CD4-positive, alpha-beta T cell (primary cell): ENCODE measurements at regions of chr2 and their contacts with region 1.

Region 1: DNA sequence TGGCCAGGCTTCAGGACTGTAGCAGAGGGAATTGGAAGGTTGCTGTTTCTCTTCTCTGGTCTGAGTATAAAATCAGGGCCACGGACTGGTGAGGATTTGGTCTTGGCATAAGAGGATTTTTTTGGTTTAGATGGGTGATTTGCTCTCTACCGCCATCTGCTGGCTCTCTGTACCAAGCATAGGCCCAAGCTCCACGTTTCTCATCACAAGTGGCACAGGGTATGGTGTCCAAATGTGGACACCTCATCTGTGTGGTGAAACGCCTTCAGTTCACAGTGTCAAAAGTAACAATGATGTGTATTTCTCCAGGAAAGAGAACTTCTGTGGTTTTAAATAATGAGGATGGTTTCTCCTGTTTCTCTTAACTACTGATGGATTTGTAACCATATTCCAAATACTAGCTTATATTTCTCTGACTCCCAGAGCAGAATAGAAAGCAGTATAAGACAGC is 115.1 kb downstream of the EML6 start:
- DNase-seq: peak; percentile 37 to 82 (median 54)
- ATAC-seq: peak; percentile 73
- H3K4me3 ChIP-seq: no peak overlapping the region
- H3K4me3 Mint-ChIP-seq: no peak overlapping the region
- H3K27ac ChIP-seq: no peak overlapping the region
- H3K27ac Mint-ChIP-seq: no peak overlapping the region
- H3K4me1 ChIP-seq: no peaks in the 10 kb centered on the region
- H3K4me1 Mint-ChIP-seq: no peaks in the 10 kb centered on the region
- H3K27me3 ChIP-seq: no peaks in the 10 kb centered on the region
- H3K27me3 Mint-ChIP-seq: no peaks in the 10 kb centered on the region
- CTCF ChIP-seq: peak; percentile 92

Region 2: GRCh38 chr2:54106631-54107454 is 731.8 kb before region 1 on chr2:
- CTCF ChIA-PET with region 1: interaction called, 5 read pairs
- POLR2A ChIA-PET with region 1: no interaction called
- intact Hi-C with region 1: loop called (anchors 1 to 5 kb)
- DNase-seq: peak in 12 of 14 experiments; percentile 11 to 77 (median 30)
- ATAC-seq: peak; percentile 78
- H3K4me3 ChIP-seq: no peak overlapping the region
- H3K4me3 Mint-ChIP-seq: no peak overlapping the region
- H3K27ac ChIP-seq: no peak overlapping the region
- H3K27ac Mint-ChIP-seq: no peak overlapping the region
- H3K4me1 ChIP-seq: peaks cover 8% of the 10 kb centered on the region
- H3K4me1 Mint-ChIP-seq: peaks cover 11% of the 10 kb centered on the region
- H3K27me3 ChIP-seq: no peaks in the 10 kb centered on the region
- H3K27me3 Mint-ChIP-seq: no peaks in the 10 kb centered on the region
- CTCF ChIP-seq: peak; percentile 66

Region 3: GRCh38 chr2:54531558-54531957 is 307.1 kb before region 1 on chr2:
- CTCF ChIA-PET with region 1: no interaction called
- POLR2A ChIA-PET with region 1: no interaction called
- intact Hi-C with region 1: no loop called
- DNase-seq: no peak
- ATAC-seq: no peak
- H3K4me3 ChIP-seq: no peak overlapping the region
- H3K4me3 Mint-ChIP-seq: no peak overlapping the region
- H3K27ac ChIP-seq: no peak overlapping the region
- H3K27ac Mint-ChIP-seq: no peak overlapping the region
- H3K4me1 ChIP-seq: no peaks in the 10 kb centered on the region
- H3K4me1 Mint-ChIP-seq: peaks cover 18% of the 10 kb centered on the region
- H3K27me3 ChIP-seq: no peaks in the 10 kb centered on the region
- H3K27me3 Mint-ChIP-seq: no peaks in the 10 kb centered on the region
- CTCF ChIP-seq: no peak

Region 4: DNA sequence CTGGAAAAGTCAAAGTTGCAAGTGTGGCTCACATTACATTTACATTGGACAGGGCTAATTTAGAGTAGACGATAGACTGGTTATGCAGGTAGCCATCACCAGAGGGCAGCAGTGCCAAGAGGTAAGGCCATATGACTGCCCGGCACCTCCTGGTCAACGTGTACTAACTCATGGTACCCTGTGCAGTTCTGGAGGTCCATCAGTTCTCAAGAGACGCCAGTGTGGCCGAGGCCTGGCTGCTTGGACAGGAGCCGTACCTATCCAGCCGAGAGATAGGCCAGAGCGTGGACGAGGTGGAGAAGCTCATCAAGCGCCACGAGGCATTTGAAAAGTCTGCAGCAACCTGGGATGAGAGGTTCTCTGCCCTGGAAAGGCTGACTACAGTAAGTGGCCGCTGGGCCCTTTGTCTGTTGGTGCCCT is 180.9 kb before region 1 on chr2:
- CTCF ChIA-PET with region 1: no interaction called
- POLR2A ChIA-PET with region 1: no interaction called
- intact Hi-C with region 1: loop called (anchors 5 to 10 kb)
- DNase-seq: peak in 5 of 14 experiments; percentile 12 to 49 (median 39)
- ATAC-seq: peak; percentile 49
- H3K4me3 ChIP-seq: no peak overlapping the region
- H3K4me3 Mint-ChIP-seq: no peak overlapping the region
- H3K27ac ChIP-seq: no peak overlapping the region
- H3K27ac Mint-ChIP-seq: peak overlapping the region; percentile 61
- H3K4me1 ChIP-seq: no peaks in the 10 kb centered on the region
- H3K4me1 Mint-ChIP-seq: no peaks in the 10 kb centered on the region
- H3K27me3 ChIP-seq: no peaks in the 10 kb centered on the region
- H3K27me3 Mint-ChIP-seq: no peaks in the 10 kb centered on the region
- CTCF ChIP-seq: peak; percentile 55

Region 5: DNA sequence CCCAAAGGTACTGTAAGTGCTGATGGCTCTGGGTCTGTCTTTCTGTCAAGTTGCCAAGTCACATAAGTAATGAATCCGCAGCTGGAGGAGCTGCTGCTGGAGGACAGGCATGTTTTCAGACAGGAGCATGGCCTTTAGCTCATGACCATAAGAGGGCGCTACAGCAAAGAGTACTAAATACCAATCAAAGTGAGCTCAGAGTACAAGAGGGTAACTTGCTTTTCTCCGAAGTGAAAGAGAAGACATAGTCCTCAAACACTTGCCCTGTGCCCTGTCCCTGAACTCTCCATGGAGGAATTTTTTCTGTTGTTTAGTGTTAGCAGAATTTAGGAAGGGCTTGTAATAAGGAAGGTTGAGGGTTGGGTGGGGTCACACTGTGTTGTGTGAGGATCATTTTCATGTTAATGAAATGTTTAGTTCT is 173.2 kb before region 1 on chr2:
- CTCF ChIA-PET with region 1: interaction called, 10 read pairs
- POLR2A ChIA-PET with region 1: no interaction called
- intact Hi-C with region 1: loop called in 1 of 2 experiments (anchors 10 kb)
- DNase-seq: peak in 9 of 14 experiments; percentile 10 to 71 (median 32)
- ATAC-seq: peak; percentile 77
- H3K4me3 ChIP-seq: no peak overlapping the region
- H3K4me3 Mint-ChIP-seq: no peak overlapping the region
- H3K27ac ChIP-seq: no peak overlapping the region
- H3K27ac Mint-ChIP-seq: peak overlapping the region; percentile 18
- H3K4me1 ChIP-seq: no peaks in the 10 kb centered on the region
- H3K4me1 Mint-ChIP-seq: peaks cover 5% of the 10 kb centered on the region
- H3K27me3 ChIP-seq: no peaks in the 10 kb centered on the region
- H3K27me3 Mint-ChIP-seq: no peaks in the 10 kb centered on the region
- CTCF ChIP-seq: peak; percentile 55

Region 6: DNA sequence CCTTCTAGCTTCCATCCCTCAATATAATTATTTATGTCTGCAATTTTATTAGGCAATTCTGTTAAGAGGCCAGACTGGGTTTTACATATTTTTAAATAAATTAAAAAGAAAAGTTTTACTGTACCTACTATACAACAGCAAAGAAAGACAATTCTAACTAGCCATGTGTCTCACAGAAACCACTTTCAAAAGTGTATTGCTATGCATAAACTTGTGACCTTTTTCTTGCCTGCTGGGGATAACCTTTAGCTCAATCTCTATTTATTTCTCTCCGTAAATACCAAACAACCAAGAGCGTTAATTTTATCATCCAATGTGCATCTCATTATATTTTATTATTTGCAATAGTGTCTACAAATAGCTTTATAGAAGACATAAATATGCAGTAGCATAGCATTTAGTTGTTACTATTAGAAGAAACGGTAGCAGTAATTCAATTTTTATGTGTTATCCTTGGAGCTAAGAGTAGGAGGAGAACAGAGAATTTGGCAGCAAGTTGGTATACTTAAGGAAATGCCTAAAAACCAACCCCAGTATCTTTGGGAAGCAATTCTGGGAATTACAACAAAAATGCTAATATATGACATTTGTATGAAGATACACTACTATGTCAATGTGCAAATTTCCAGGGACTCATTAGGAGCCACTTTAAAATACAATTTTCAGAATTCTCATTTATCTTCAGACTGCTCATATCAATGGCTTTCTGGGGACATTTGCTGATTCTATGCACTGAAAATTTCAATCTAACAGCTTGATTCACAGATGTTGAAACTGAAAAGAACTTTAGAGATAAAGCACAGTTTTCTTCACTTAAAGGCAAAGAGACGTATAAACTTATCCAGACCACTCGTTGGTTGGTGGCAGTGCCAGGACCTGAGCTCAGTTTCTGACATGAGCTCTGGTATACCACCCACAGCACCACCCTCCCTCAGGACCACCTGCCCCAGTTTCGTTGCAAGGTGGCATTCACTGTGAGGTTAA is 234.7 kb after region 1 on chr2:
- CTCF ChIA-PET with region 1: no interaction called
- POLR2A ChIA-PET with region 1: no interaction called
- intact Hi-C with region 1: no loop called
- DNase-seq: no peak
- ATAC-seq: no peak
- H3K4me3 ChIP-seq: no peak overlapping the region
- H3K4me3 Mint-ChIP-seq: no peak overlapping the region
- H3K27ac ChIP-seq: no peak overlapping the region
- H3K27ac Mint-ChIP-seq: no peak overlapping the region
- H3K4me1 ChIP-seq: no peaks in the 10 kb centered on the region
- H3K4me1 Mint-ChIP-seq: no peaks in the 10 kb centered on the region
- H3K27me3 ChIP-seq: no peaks in the 10 kb centered on the region
- H3K27me3 Mint-ChIP-seq: no peaks in the 10 kb centered on the region
- CTCF ChIP-seq: no peak